ENCODE measurements at regions of chr9 and their contacts with region 1.

Region 1: DNA sequence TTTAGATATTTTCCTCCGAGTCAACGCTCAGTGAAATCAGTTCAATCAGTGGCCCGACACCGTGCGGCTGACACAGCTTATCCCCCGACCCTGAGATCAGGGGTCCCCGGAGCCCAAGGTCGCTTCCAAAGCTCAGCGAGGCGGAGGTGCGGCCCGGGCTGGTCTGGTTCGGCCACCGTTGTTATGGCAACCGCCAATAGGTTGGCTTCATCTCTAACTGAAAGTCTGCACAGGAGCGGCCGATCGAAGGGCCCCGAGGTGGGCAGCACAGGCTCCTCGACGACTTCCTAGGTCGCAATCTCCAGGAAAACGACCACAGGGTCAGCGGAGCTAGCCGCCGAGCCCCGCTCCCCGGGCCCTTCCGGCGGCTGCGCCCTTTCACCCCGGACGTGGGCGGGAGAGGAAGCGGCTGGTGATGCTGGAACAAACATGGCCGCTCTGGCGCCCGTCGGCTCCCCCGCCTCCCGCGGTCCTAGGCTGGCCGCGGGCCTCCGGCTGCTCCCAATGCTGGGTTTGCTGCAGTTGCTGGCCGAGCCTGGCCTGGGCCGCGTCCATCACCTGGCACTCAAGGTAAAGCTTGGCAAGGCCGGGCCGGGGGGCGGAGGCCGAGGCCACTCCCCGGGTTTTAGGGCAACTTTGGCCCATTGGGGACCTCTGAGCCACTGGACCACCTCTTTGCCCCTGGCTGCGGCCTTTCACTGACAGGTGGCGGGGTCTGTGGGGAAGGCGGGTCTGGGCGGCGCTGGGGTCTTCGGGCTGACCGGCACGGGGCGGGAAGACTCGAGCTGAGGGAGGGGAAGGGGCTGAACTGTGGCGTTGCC is at the start of gene GPR107:
- DNase-seq: peak; percentile 89
- ATAC-seq: peak; percentile 91
- H3K4me3 Mint-ChIP-seq: peak within 1 kb of the TSS; percentile 94
- H3K27ac Mint-ChIP-seq: peak within 1 kb of the TSS; percentile 92
- H3K4me1 Mint-ChIP-seq: peaks cover 27% of the 10 kb centered on the region
- H3K27me3 Mint-ChIP-seq: no peaks in the 10 kb centered on the region
- CTCF ChIP-seq: no peak
- total RNA-seq, gene GPR107: 18.2 to 19.0 TPM

Region 2: GRCh38 chr9:130069048-130069447 is 15.3 kb after region 1 on chr9:
- CTCF ChIA-PET with region 1: interaction called, 31 read pairs
- POLR2A ChIA-PET with region 1: interaction called, 4 read pairs
- intact Hi-C with region 1: no loop called
- DNase-seq: no peak
- ATAC-seq: peak; percentile 20
- H3K4me3 Mint-ChIP-seq: no peak overlapping the region
- H3K27ac Mint-ChIP-seq: peak overlapping the region; percentile 61
- H3K4me1 Mint-ChIP-seq: peaks cover 30% of the 10 kb centered on the region
- H3K27me3 Mint-ChIP-seq: no peaks in the 10 kb centered on the region
- CTCF ChIP-seq: no peak

Region 3: GRCh38 chr9:130172161-130172857 is 118.6 kb after region 1 on chr9 and contains the start of gene NCS1:
- CTCF ChIA-PET with region 1: no interaction called
- POLR2A ChIA-PET with region 1: no interaction called
- intact Hi-C with region 1: no loop called
- DNase-seq: peak; percentile 59
- ATAC-seq: peak; percentile 82
- H3K4me3 Mint-ChIP-seq: peak within 1 kb of the TSS; percentile 70
- H3K27ac Mint-ChIP-seq: no peak within 1 kb of the TSS
- H3K4me1 Mint-ChIP-seq: peaks cover 11% of the 10 kb centered on the region
- H3K27me3 Mint-ChIP-seq: peaks cover 16% of the 10 kb centered on the region
- CTCF ChIP-seq: no peak
- total RNA-seq, gene NCS1: 21.2 to 21.3 TPM

Measured in activated CD8-positive, alpha-beta T cell treated with anti-CD3 and anti-CD28 coated beads for 36 hours (primary cell).